ENCODE measurements at regions of chr17 and their contacts with region 1.

Region 1: GRCh38 chr17:64025732-64026294 is 5.4 kb upstream of the ICAM2 start:
- DNase-seq: peak; percentile 84
- ATAC-seq: peak; percentile 97
- H3K4me3 ChIP-seq: peak overlapping the region; percentile 45 to 50
- H3K27ac ChIP-seq: no peak overlapping the region
- H3K4me1 ChIP-seq: peaks cover 3 to 11% of the 10 kb centered on the region in 2 experiments; a peak in 3 of 4 replicates
- H3K27me3 ChIP-seq: no peaks in the 10 kb centered on the region
- CTCF ChIP-seq: peak; percentile 99 to 100 (median 100)
- POLR2A ChIP-seq: peak; percentile 63
- RAD21 ChIP-seq: peak; percentile 88

Region 2: DNA sequence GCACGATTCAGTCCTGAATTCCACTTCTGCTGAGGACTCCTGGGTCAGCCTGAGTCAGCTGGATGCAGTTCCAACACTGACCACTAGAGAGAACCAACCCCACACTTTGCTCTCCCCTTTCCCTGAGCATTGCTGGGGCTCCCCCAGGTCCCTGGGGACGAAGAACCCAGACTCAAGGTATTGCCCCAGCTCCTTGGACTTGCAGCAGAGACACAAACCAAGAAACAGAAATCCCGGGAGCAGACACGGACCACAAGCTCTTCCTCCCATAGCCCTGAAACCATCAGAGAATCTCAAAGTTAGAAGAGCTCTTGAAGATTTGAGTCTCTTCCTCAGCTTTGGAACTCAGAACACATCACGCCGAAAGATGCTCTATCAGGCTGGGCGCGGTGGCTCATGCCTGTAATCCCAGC is 106.5 kb before region 1 on chr17:
- CTCF ChIA-PET with region 1: interaction called, 88 read pairs
- POLR2A ChIA-PET with region 1: no interaction called
- RAD21 ChIA-PET with region 1: interaction called, 4 to 8 read pairs
- intact Hi-C with region 1: loop called (anchors 1 kb)
- DNase-seq: peak; percentile 59
- ATAC-seq: peak; percentile 98
- H3K4me3 ChIP-seq: no peak overlapping the region
- H3K27ac ChIP-seq: no peak overlapping the region
- H3K4me1 ChIP-seq: no peaks in the 10 kb centered on the region
- H3K27me3 ChIP-seq: no peaks in the 10 kb centered on the region
- CTCF ChIP-seq: peak; percentile 96 to 98 (median 98)
- POLR2A ChIP-seq: no peak
- RAD21 ChIP-seq: peak; percentile 97

Region 3: GRCh38 chr17:64005734-64006167 is 20.1 kb before region 1 on chr17:
- CTCF ChIA-PET with region 1: interaction called, 18 read pairs
- POLR2A ChIA-PET with region 1: no interaction called
- RAD21 ChIA-PET with region 1: no interaction called
- intact Hi-C with region 1: no loop called
- DNase-seq: no peak
- ATAC-seq: peak; percentile 92
- H3K4me3 ChIP-seq: peak overlapping the region in 1 of 2 experiments; percentile 22; a peak in 2 of 4 replicates
- H3K27ac ChIP-seq: no peak overlapping the region
- H3K4me1 ChIP-seq: peaks cover 14 to 41% of the 10 kb centered on the region in 2 experiments
- H3K27me3 ChIP-seq: no peaks in the 10 kb centered on the region
- CTCF ChIP-seq: no peak
- POLR2A ChIP-seq: no peak
- RAD21 ChIP-seq: no peak

Region 4: GRCh38 chr17:64063766-64064224 is 38.0 kb after region 1 on chr17:
- CTCF ChIA-PET with region 1: interaction called, 12 read pairs
- POLR2A ChIA-PET with region 1: no interaction called
- RAD21 ChIA-PET with region 1: interaction called, 5 read pairs
- intact Hi-C with region 1: no loop called
- DNase-seq: no peak
- ATAC-seq: peak; percentile 97
- H3K4me3 ChIP-seq: no peak overlapping the region
- H3K27ac ChIP-seq: no peak overlapping the region
- H3K4me1 ChIP-seq: no peaks in the 10 kb centered on the region
- H3K27me3 ChIP-seq: no peaks in the 10 kb centered on the region
- CTCF ChIP-seq: peak; percentile 45 to 81 (median 72)
- POLR2A ChIP-seq: no peak
- RAD21 ChIP-seq: peak; percentile 91

Region 5: GRCh38 chr17:64216338-64217248 is 190.8 kb after region 1 on chr17:
- CTCF ChIA-PET with region 1: no interaction called
- POLR2A ChIA-PET with region 1: no interaction called
- RAD21 ChIA-PET with region 1: no interaction called
- intact Hi-C with region 1: no loop called
- DNase-seq: no peak
- ATAC-seq: peak; percentile 83
- H3K4me3 ChIP-seq: no peak overlapping the region
- H3K27ac ChIP-seq: no peak overlapping the region
- H3K4me1 ChIP-seq: peaks cover 4 to 10% of the 10 kb centered on the region in 2 experiments; a peak in 2 of 4 replicates
- H3K27me3 ChIP-seq: no peaks in the 10 kb centered on the region
- CTCF ChIP-seq: peak in 1 of 3 experiments; percentile 39; a peak in 3 of 6 replicates
- POLR2A ChIP-seq: no peak
- RAD21 ChIP-seq: peak; percentile 13; the same call in 1 of the 2 replicates

Region 6: GRCh38 chr17:64281962-64282727 is 256.3 kb after region 1 on chr17:
- CTCF ChIA-PET with region 1: interaction called, 15 read pairs
- POLR2A ChIA-PET with region 1: no interaction called
- RAD21 ChIA-PET with region 1: no interaction called
- intact Hi-C with region 1: loop called (anchors 1 kb)
- DNase-seq: peak; percentile 86
- ATAC-seq: peak; percentile 89
- H3K4me3 ChIP-seq: no peak overlapping the region
- H3K27ac ChIP-seq: no peak overlapping the region
- H3K4me1 ChIP-seq: peaks cover 0 to 10% of the 10 kb centered on the region in 2 experiments; a peak in 2 of 4 replicates
- H3K27me3 ChIP-seq: no peaks in the 10 kb centered on the region
- CTCF ChIP-seq: peak; percentile 87 to 94 (median 91)
- POLR2A ChIP-seq: no peak
- RAD21 ChIP-seq: peak; percentile 94

Region 7: GRCh38 chr17:64326395-64327054 is 300.7 kb after region 1 on chr17:
- CTCF ChIA-PET with region 1: no interaction called
- POLR2A ChIA-PET with region 1: no interaction called
- RAD21 ChIA-PET with region 1: no interaction called
- intact Hi-C with region 1: no loop called
- DNase-seq: no peak
- ATAC-seq: no peak
- H3K4me3 ChIP-seq: no peak overlapping the region
- H3K27ac ChIP-seq: no peak overlapping the region
- H3K4me1 ChIP-seq: no peaks in the 10 kb centered on the region; a peak in 1 of 4 replicates
- H3K27me3 ChIP-seq: no peaks in the 10 kb centered on the region
- CTCF ChIP-seq: no peak
- POLR2A ChIP-seq: no peak
- RAD21 ChIP-seq: no peak

Region 8: DNA sequence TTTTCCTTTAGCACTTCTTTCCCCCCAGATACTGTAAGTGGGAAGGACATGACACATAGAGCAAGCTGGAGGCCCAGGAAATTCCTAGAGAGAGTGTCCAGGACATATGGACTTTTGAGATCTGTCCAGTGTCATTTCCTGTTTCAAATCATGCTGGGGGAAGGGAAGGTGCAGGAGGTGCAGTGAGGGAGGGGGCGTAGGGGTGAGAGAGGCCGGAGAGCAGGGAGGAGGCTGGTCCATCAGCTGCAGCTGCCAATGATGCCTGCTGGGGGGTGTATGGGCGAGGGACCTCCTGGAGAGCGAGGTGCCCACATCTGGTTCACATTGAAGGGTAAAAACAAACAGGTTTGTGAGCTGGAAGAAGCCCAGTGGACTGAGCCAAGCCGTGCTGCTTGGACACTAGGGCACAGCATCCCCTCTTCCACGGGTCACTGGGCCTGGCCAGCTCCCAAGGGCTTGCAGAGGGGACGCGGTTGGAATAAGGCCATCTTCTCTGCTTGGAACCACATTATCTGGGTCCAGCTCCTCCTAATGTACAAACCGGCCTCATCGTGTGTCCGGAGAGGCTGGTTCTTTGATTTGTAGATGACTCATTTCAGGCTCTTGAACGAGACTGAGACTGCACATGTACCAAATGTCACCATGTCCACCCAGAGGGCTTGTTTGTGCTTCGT is 706.7 kb after region 1 on chr17:
- CTCF ChIA-PET with region 1: no interaction called
- POLR2A ChIA-PET with region 1: no interaction called
- RAD21 ChIA-PET with region 1: no interaction called
- intact Hi-C with region 1: no loop called
- DNase-seq: no peak
- ATAC-seq: peak; percentile 55
- H3K4me3 ChIP-seq: peak overlapping the region in 1 of 2 experiments; percentile 21; a peak in 2 of 4 replicates
- H3K27ac ChIP-seq: peak overlapping the region; percentile 59
- H3K4me1 ChIP-seq: peaks cover 44 to 91% of the 10 kb centered on the region in 2 experiments
- H3K27me3 ChIP-seq: no peaks in the 10 kb centered on the region
- CTCF ChIP-seq: no peak
- POLR2A ChIP-seq: no peak
- RAD21 ChIP-seq: no peak; the same call in 1 of the 2 replicates